ENCODE measurements at regions of chr1 and their contacts with region 1.

Region 1: GRCh38 chr1:218735436-218736032 is 390.4 kb downstream of the TGFB2 start:
- DNase-seq: no peak
- H3K4me3 ChIP-seq: no peak overlapping the region
- H3K27ac ChIP-seq: no peak overlapping the region
- H3K4me1 ChIP-seq: peaks cover 9% of the 10 kb centered on the region
- H3K27me3 ChIP-seq: no peaks in the 10 kb centered on the region
- CTCF ChIP-seq: no peak

Region 2: DNA sequence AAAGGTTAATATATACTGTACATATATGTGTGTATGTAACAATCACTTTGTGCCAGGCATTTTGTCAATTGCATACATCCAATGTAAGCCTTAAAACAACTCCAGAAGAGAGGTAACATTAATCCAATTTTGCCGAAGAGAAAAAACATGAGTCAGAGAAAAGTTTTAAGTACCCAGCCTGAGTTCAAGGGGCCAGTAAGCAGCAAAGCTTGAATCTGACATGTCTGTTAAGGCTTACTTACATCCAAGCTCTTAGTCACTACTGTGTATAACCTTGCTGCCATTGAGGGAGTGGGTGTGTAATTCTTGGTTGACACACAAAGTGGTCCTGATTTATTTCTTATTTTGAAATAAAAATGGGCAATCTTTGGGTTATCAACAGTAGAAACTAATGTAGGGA is 77.7 kb after region 1 on chr1:
- CTCF ChIA-PET with region 1: no interaction called
- dilution Hi-C with region 1: no loop called
- in situ Hi-C with region 1: no loop called
- intact Hi-C with region 1: no loop called
- DNase-seq: peak; percentile 8
- H3K4me3 ChIP-seq: no peak overlapping the region
- H3K27ac ChIP-seq: no peak overlapping the region
- H3K4me1 ChIP-seq: peaks cover 4% of the 10 kb centered on the region
- H3K27me3 ChIP-seq: no peaks in the 10 kb centered on the region
- CTCF ChIP-seq: no peak

Region 3: GRCh38 chr1:218953386-218953785 is 217.9 kb after region 1 on chr1:
- CTCF ChIA-PET with region 1: interaction called, 12 read pairs
- dilution Hi-C with region 1: no loop called
- in situ Hi-C with region 1: no loop called
- intact Hi-C with region 1: no loop called
- DNase-seq: no peak
- H3K4me3 ChIP-seq: no peak overlapping the region
- H3K27ac ChIP-seq: no peak overlapping the region
- H3K4me1 ChIP-seq: no peaks in the 10 kb centered on the region
- H3K27me3 ChIP-seq: no peaks in the 10 kb centered on the region
- CTCF ChIP-seq: no peak